ENCODE measurements at regions of chr1 and their contacts with region 1.

Region 1: DNA sequence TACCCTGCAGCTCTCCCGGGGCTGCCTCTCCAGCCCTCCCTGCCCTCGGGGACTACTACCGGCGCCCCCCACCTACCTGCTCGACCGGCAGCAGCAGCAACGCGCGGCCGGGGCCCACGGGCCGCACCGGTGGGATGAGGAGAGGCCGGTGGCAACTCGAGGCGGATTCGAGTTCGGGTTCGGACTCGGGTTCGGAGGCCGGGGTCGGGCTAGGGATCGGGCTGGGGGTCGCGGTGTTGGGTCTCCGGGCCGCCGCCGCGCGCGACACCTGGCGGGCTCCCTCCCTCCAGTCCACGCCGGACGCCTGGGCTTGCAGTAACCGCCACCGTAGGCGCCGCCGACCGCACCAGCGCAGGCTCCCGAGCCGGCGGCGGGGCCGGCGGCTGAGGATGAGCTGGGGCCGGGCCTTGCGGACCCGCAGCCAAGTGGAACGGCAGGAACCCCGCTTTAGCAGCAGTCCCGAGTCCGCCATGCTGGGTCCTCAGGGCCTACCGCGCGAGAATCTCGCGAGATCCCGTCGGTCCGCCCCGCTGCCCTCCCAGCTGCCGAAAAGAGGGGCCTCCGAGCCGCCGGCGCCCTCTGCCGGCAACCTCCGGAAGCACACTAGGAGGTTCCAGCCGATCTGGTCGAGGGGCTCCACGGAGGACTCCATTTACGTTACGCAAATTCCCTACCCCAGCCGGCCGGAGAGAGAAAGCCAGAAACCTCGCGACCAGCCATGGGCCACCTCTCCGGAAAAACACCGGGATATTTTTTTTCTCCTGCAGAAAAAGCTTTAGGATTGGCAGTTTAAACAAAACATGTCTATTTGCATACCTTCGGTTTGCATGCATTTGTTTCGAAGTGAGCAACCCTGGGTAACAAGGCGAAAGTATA is at the start of gene NOL9:
- DNase-seq: peak; percentile 94 to 98 (median 96)
- ATAC-seq: peak; percentile 91 to 98 (median 98)
- H3K4me3 ChIP-seq: peak within 1 kb of the TSS; percentile 88 to 100 (median 96)
- H3K27ac ChIP-seq: peak within 1 kb of the TSS; percentile 70 to 90 (median 82)
- H3K4me1 ChIP-seq: peaks cover 4 to 24% (median 19%) of the 10 kb centered on the region in 12 donors
- H3K27me3 ChIP-seq: no peaks in the 10 kb centered on the region
- CTCF ChIP-seq: peak; percentile 95 to 99 (median 98)
- POLR2A ChIP-seq: peak in 1 of 2 donors; percentile 60
- total RNA-seq, gene NOL9: 13.1 to 20.6 (median 16.5) TPM

Region 2: GRCh38 chr1:6489799-6490180 is 64.5 kb before region 1 on chr1:
- intact Hi-C with region 1: loop called in 4 of 10 experiments (anchors 2 to 10 kb)
- DNase-seq: peak; percentile 64 to 86 (median 72)
- ATAC-seq: peak; percentile 28 to 69 (median 52)
- H3K4me3 ChIP-seq: peak overlapping the region; percentile 40 to 81 (median 64)
- H3K27ac ChIP-seq: peak overlapping the region in 9 of 12 donors; percentile 64 to 86 (median 77)
- H3K4me1 ChIP-seq: peaks cover 3 to 80% (median 50%) of the 10 kb centered on the region in 12 donors
- H3K27me3 ChIP-seq: peaks cover 0 to 27% (median 4%) of the 10 kb centered on the region in 9 donors
- CTCF ChIP-seq: peak; percentile 86 to 97 (median 92)
- POLR2A ChIP-seq: no peak

Region 3: DNA sequence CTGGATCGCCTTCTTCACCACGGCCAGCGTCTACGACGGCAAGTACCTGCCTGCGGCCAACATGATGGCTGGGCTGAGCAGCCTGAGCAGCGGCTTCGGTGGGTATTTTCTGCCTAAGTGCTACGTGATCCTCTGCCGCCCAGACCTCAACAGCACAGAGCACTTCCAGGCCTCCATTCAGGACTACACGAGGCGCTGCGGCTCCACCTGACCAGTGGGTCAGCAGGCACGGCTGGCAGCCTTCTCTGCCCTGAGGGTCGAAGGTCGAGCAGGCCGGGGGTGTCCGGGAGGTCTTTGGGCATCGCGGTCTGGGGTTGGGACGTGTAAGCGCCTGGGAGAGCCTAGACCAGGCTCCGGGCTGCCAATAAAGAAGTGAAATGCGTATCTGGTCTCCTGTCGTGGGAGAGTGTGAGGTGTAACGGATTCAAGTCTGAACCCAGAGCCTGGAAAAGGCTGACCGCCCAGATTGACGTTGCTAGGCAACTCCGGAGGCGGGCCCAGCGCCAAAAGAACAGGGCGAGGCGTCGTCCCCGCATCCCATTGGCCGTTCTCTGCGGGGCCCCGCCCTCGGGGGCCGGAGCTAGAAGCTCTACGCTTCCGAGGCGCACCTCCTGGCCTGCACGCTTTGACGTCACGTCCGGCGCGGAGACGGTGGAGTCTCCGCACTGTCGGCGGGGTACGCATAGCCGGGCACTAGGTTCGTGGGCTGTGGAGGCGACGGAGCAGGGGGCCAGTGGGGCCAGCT is 25.3 kb after region 1 on chr1 and contains the start of gene ZBTB48:
- intact Hi-C with region 1: loop called in 1 of 10 experiments (anchors 2 kb)
- DNase-seq: peak; percentile 99 to 100 (median 100)
- ATAC-seq: peak; percentile 95 to 98 (median 98)
- H3K4me3 ChIP-seq: peak within 1 kb of the TSS; percentile 65 to 97 (median 83)
- H3K27ac ChIP-seq: peak within 1 kb of the TSS; percentile 79 to 97 (median 91)
- H3K4me1 ChIP-seq: peaks cover 6 to 52% (median 35%) of the 10 kb centered on the region in 12 donors
- H3K27me3 ChIP-seq: no peaks in the 10 kb centered on the region
- CTCF ChIP-seq: no peak
- POLR2A ChIP-seq: peak; percentile 92 to 95
- total RNA-seq, gene ZBTB48: 6.4 to 23.1 (median 11.8) TPM

Region 4: GRCh38 chr1:6624710-6625583 is 70.7 kb after region 1 on chr1 and contains the start of gene THAP3:
- intact Hi-C with region 1: loop called in 2 of 10 experiments (anchors 5 kb)
- DNase-seq: peak; percentile 90 to 95 (median 92)
- ATAC-seq: peak; percentile 70 to 95 (median 95)
- H3K4me3 ChIP-seq: peak within 1 kb of the TSS; percentile 60 to 98 (median 82)
- H3K27ac ChIP-seq: peak within 1 kb of the TSS; percentile 69 to 90 (median 84)
- H3K4me1 ChIP-seq: peaks cover 3 to 28% (median 18%) of the 10 kb centered on the region in 12 donors
- H3K27me3 ChIP-seq: no peaks in the 10 kb centered on the region
- CTCF ChIP-seq: peak in 4 of 12 donors; percentile 13 to 37 (median 16)
- POLR2A ChIP-seq: peak in 1 of 2 donors; percentile 40
- total RNA-seq, gene THAP3: 7.5 to 20.7 (median 12.1) TPM

Region 5: DNA sequence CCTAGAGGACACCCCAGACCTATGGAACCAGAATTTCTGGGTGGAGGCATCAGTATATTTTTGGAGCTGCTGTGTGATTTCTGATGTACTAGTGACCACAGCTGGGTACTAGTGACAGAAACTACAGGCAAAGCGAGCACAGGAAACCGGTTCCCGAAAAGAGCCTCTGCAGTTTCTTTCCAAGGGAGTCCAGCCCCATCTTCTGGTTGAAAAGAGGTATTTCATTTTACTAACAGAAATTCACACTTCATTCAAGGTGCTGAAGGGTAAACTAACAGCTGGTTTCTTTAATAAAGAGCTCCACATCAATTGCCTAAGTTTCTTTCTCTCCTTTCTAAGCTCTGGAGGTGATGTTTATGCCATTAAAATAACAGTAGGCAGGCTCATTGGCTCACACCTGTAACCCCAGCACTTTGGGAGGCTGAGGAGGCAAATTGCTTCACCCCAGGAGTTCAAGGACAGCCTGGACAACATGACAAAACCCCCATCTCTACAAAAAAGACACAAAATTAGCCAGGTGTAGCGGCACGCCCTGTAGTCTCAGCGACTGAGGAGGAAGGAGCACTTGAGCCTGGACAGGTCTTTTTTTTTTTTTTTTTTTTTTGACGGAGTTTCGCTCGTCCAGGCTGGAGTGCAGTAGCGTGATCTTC is 92.4 kb after region 1 on chr1:
- intact Hi-C with region 1: loop called in 3 of 10 experiments (anchors 2 to 5 kb)
- DNase-seq: peak in 1 of 5 donors; percentile 32
- ATAC-seq: peak in 3 of 4 donors; percentile 37 to 45 (median 45)
- H3K4me3 ChIP-seq: no peak overlapping the region
- H3K27ac ChIP-seq: no peak overlapping the region
- H3K4me1 ChIP-seq: no peaks in the 10 kb centered on the region
- H3K27me3 ChIP-seq: no peaks in the 10 kb centered on the region
- CTCF ChIP-seq: peak; percentile 35 to 72 (median 58)
- POLR2A ChIP-seq: no peak

Measured in heart left ventricle (tissue), 16 donors.